Motor neuron (in vitro differentiated cells): ENCODE measurements at regions of chr11 and their contacts with region 1.

Region 1: GRCh38 chr11:35029979-35030378 is 109.0 kb upstream of the CD44 start:
- ATAC-seq: peak in 3 of 8 experiments; percentile 80 to 93 (median 81)
- H3K4me3 ChIP-seq: no peak overlapping the region
- H3K27ac ChIP-seq: no peak overlapping the region
- H3K4me1 ChIP-seq: no peaks in the 10 kb centered on the region

Region 2: DNA sequence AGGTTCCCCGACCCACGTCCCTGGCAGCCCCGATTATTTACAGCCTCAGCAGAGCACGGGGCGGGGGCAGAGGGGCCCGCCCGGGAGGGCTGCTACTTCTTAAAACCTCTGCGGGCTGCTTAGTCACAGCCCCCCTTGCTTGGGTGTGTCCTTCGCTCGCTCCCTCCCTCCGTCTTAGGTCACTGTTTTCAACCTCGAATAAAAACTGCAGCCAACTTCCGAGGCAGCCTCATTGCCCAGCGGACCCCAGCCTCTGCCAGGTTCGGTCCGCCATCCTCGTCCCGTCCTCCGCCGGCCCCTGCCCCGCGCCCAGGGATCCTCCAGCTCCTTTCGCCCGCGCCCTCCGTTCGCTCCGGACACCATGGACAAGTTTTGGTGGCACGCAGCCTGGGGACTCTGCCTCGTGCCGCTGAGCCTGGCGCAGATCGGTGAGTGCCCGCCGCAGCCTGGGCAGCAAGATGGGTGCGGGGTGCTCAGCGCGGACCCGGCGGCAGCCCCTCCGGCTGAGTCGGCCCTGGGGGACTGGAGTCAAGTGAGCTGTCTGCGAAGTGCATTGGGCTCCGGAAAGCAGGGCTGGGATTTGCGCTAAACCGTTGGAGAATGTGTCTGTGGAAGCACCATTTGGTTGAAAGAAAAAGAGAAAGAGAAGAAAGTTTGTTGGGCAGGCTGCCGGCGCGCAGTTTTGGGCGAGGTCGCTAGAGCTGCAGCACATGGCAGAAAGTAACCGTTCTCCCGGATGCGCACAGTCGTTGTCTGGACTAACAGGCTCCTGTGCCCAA is 109.2 kb after region 1 on chr11 and contains the start of gene CD44:
- in situ Hi-C with region 1: loop called in 1 of 9 experiments (anchors 10 kb)
- ATAC-seq: peak; percentile 52 to 82 (median 58)
- H3K4me3 ChIP-seq: peak within 1 kb of the TSS; percentile 18 to 35 (median 26)
- H3K27ac ChIP-seq: no peak within 1 kb of the TSS
- H3K4me1 ChIP-seq: peaks cover 4 to 7% of the 10 kb centered on the region in 2 donors
- total RNA-seq, gene CD44: 0.05 to 107 (median 42.9) TPM